Gastrocnemius medialis (tissue), 4 donors: ENCODE measurements at regions of chr7 and their contacts with region 1.

Region 1: DNA sequence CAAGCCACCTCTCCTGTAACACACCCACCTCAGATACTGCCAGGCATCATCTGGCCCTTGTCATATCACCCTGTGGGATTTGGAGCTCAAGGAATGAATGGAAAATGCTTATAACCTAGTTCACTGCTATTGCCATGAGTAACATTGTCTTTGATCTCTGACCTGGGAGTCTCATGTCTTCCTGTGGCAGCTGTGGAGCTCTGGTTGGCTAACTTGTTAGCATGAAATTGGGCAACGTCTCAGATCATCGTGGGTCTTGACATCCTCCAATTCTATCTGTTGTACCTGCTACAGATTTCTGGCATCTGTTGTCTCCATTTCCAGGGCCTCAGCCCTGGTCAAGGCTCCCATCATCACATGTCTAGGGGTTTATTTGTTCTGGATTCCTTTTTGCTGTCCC is 2.2 kb upstream of the TMEM270 start:
- DNase-seq: no peak
- ATAC-seq: no peak
- H3K4me3 ChIP-seq: no peak overlapping the region
- H3K27ac ChIP-seq: no peak overlapping the region
- H3K4me1 ChIP-seq: no peaks in the 10 kb centered on the region
- H3K27me3 ChIP-seq: peaks cover 0 to 5% (median 0%) of the 10 kb centered on the region in 3 donors
- CTCF ChIP-seq: no peak
- POLR2A ChIP-seq: no peak

Region 2: DNA sequence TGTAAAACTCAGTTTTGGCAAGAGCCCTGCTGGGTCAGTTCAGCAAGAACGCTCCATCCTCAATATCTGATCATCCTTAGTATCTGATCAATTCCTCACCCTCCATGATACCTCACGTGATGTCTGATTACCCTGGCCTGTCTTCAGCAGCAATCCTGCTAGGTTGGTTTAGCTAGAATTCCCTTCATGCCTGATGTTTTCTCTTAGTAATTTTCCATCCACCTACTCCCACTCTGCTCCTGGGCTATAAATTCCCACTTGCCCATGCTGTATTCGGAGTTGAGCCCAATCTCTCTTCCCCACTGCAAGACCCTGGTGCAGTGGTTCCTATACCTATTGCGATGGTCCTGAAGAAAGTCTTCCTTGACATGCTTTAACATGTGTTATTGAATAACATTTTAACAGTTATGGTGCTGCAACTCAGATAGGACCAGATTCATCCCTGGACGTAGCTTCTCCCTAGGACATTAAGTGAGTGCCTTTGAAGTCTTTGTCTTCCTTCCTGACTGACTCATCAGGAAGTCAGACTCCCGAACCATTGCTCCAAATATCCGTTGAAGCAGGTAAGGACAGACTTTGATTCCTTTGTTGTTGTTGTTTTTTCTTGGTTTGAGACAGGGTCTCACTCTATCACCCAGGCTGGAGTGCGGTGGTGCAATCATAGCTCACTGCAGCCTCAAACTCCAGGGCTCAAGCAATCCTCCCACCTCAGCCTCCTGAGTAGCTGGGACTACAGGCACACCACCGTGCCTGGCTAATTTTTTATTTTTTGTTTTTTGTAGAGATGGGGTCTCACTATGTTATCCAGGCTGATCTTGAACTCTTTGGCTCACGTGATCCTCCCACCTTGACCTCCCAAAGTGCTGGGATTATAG is 59.3 kb before region 1 on chr7:
- in situ Hi-C with region 1: no loop called
- intact Hi-C with region 1: no loop called
- DNase-seq: no peak
- ATAC-seq: no peak
- H3K4me3 ChIP-seq: no peak overlapping the region
- H3K27ac ChIP-seq: no peak overlapping the region
- H3K4me1 ChIP-seq: no peaks in the 10 kb centered on the region
- H3K27me3 ChIP-seq: no peaks in the 10 kb centered on the region
- CTCF ChIP-seq: no peak
- POLR2A ChIP-seq: no peak

Region 3: DNA sequence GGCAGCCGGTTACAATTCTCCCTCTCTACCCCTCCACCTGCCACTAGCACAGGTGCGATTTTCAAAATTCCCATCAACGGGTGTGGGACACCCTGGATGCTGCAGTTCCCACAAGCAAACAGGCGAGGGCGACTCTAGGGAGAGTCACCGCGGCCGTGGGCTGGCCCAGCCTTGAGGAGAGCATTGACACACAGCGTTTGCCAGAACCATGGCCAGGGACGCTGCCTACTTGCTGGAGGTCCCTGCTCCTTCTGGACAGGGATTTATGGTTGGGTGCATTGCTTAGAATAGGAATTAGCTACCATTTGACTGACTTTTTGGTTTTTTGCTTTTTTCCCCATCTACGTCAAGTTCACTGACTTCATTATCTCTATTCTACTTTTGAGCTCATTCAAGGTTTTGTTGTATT is 47.0 kb before region 1 on chr7:
- in situ Hi-C with region 1: loop called in 3 of 4 experiments (anchors 5 kb)
- intact Hi-C with region 1: loop called (anchors 1 kb)
- DNase-seq: peak; percentile 31 to 41
- ATAC-seq: peak; percentile 42 to 58
- H3K4me3 ChIP-seq: no peak overlapping the region
- H3K27ac ChIP-seq: no peak overlapping the region
- H3K4me1 ChIP-seq: no peaks in the 10 kb centered on the region
- H3K27me3 ChIP-seq: peaks cover 0 to 11% (median 0%) of the 10 kb centered on the region in 3 donors
- CTCF ChIP-seq: peak; percentile 47 to 81 (median 63)
- POLR2A ChIP-seq: no peak

Region 4: DNA sequence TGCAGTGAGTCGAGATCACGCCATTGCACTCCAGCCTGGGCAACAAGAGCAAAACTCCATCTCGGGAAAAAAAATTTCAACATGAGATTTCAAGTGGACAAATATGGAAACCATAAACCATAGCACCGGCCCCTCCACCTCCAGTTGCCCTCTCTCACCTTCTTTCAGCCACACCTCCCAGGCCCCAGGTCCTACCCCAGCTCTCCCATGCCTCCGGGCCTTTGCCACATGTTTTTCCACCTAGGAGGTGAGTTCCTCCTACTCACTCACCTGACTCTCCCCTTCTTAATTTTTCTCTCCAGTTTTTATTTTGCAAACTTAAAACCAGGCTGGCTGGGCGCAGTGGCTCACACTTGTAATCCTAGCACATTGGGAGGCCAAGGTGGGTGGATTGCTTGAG is 41.7 kb before region 1 on chr7:
- in situ Hi-C with region 1: loop called in 3 of 4 experiments (anchors 5 kb)
- intact Hi-C with region 1: no loop called
- DNase-seq: no peak
- ATAC-seq: no peak
- H3K4me3 ChIP-seq: no peak overlapping the region
- H3K27ac ChIP-seq: no peak overlapping the region
- H3K4me1 ChIP-seq: no peaks in the 10 kb centered on the region
- H3K27me3 ChIP-seq: no peaks in the 10 kb centered on the region
- CTCF ChIP-seq: no peak
- POLR2A ChIP-seq: no peak

Region 5: GRCh38 chr7:73921623-73922528 is 63.1 kb after region 1 on chr7:
- in situ Hi-C with region 1: no loop called
- intact Hi-C with region 1: no loop called
- DNase-seq: no peak
- ATAC-seq: no peak
- H3K4me3 ChIP-seq: no peak overlapping the region
- H3K27ac ChIP-seq: no peak overlapping the region
- H3K4me1 ChIP-seq: peaks cover 0 to 4% of the 10 kb centered on the region in 2 donors
- H3K27me3 ChIP-seq: no peaks in the 10 kb centered on the region
- CTCF ChIP-seq: no peak
- POLR2A ChIP-seq: no peak